Esophagus muscularis mucosa (tissue), 4 donors: ENCODE measurements at regions of chr10 and their contacts with region 1.

Region 1: DNA sequence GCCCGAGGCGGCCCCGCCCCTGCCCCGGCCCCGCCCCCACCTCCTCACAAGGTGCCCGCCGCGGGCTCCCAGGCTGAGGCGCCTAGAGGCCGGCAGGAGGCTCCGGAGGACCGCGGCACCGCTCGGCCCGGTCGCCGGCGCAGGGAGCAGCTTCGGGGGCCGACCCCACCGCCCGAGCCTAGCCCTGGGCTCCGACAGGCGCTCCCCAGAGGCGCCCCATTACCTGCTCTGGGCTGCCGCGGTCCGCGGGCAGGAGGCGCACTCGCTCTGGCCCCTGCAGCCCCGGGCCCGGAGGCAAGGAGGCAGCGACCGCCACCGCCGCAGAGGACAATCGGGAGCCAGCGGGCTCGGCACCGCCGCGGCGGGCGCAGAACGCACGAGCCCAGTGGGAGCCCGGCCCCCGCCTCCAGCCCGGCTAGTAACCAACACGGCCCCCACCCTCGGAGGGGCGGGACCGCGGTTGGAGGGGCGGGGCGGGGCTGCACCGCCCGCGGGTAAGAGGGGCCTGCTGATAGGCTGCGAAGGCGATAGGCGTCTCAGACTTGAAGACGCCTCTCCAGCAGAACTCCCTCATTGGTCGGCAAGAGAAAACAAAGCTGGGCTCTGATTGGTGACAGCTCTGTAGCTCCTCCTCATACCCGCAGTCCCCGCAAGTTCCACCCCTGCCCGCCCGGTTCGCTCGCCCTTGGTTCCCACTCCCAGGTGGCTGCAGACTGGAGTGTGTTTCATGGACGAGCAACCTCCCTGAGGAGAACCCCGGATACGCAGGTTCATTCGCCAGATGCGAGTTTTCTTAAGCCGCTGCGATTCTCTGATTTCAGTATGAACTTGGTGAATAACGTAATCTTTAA is at the start of gene MPP7:
- DNase-seq: peak; percentile 99
- H3K4me3 ChIP-seq: peak within 1 kb of the TSS; percentile 69 to 96 (median 76)
- H3K27ac ChIP-seq: peak within 1 kb of the TSS; percentile 90 to 95 (median 90)
- H3K4me1 ChIP-seq: peaks cover 17 to 47% (median 42%) of the 10 kb centered on the region in 4 donors
- H3K27me3 ChIP-seq: no peaks in the 10 kb centered on the region
- CTCF ChIP-seq: peak; percentile 50 to 74 (median 65)
- EP300 ChIP-seq: no peak
- POLR2A ChIP-seq: no peak
- total RNA-seq, gene MPP7: 30.3 to 59.1 (median 49.3) TPM

Region 2: GRCh38 chr10:28047061-28047460 is 255.8 kb before region 1 on chr10:
- intact Hi-C with region 1: no loop called
- DNase-seq: no peak
- H3K4me3 ChIP-seq: no peak overlapping the region
- H3K27ac ChIP-seq: no peak overlapping the region
- H3K4me1 ChIP-seq: no peaks in the 10 kb centered on the region
- H3K27me3 ChIP-seq: no peaks in the 10 kb centered on the region
- CTCF ChIP-seq: no peak
- EP300 ChIP-seq: no peak
- POLR2A ChIP-seq: no peak

Region 3: DNA sequence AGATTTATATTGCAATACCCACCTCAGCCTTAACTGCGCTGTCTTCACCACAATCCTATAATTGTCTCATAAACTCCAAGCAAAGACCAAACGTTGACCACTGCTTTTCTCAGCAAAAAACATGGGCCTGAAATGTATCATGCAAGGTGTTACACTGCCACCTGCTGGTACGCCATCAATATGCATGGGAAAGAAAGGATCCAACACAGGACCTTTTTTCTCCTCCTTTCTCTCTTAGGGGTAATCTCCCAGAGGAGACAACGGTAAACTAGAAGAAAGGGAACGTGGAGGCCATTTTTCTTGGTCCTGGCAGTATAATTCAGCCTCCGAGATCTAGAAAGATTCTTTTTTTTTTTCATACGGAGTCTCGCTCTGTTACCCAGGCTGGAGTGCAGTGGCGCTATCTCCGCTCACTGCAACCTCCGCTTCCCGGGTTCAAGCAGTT is 79.1 kb after region 1 on chr10:
- intact Hi-C with region 1: loop called (anchors 2 kb)
- DNase-seq: peak; percentile 96
- H3K4me3 ChIP-seq: no peak overlapping the region
- H3K27ac ChIP-seq: peak overlapping the region in 1 of 4 donors; percentile 31
- H3K4me1 ChIP-seq: peaks cover 0 to 10% (median 6%) of the 10 kb centered on the region in 4 donors
- H3K27me3 ChIP-seq: no peaks in the 10 kb centered on the region
- CTCF ChIP-seq: peak; percentile 93 to 98 (median 97)
- EP300 ChIP-seq: no peak
- POLR2A ChIP-seq: no peak

Region 4: GRCh38 chr10:28628184-28628893 is 325.5 kb after region 1 on chr10:
- intact Hi-C with region 1: no loop called
- DNase-seq: no peak
- H3K4me3 ChIP-seq: no peak overlapping the region
- H3K27ac ChIP-seq: no peak overlapping the region
- H3K4me1 ChIP-seq: peaks cover 0 to 9% (median 8%) of the 10 kb centered on the region in 4 donors
- H3K27me3 ChIP-seq: peaks cover 0 to 27% (median 2%) of the 10 kb centered on the region in 4 donors
- CTCF ChIP-seq: peak; percentile 72 to 88 (median 85)
- EP300 ChIP-seq: no peak
- POLR2A ChIP-seq: no peak